ENCODE measurements at regions of chr17 and their contacts with region 1.

Region 1: DNA sequence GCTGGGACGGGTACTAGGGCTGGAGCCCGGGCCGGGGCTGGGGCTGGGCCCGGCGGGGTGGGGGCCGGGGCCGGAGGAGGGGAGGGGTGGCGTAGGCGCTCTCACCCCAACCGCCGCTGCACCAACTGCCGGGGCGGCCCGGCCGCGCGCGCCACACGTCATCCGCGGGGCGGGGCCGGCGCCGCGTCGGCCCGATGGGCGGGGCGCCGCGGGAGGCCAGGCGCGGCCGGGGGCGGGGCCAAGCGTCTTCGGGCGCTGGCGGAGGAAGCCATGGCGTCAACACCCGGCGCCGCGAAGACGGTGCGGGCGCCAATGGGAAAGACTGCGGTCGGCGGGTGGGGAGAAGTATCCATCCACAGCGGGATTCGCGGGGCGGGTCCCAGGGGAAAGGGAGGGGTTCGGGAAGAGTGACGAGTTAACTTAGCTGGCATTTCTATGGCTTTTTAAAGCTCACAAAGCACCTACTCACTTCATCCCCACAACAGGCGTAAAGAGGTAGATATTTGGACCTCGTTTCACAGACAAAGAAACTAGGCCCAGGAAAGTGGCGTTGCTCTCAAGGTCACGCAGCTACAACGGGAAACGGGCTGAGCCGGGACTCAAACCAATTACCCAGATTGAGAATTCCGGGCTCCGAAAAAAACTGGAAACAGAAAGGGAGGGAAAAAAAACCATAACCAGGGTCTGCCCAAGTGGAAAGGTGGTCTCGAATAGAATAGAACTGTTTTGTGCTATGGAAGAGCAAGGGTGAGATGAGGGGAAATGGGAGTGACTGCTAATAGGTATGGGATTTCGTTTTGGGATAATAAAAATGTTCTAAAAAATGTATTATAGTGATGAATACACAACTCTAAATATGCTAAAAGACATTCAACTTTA is at the start of gene SPAG9:
- DNase-seq: peak; percentile 97 to 98
- ATAC-seq: peak; percentile 89 to 97 (median 92)
- H3K4me3 ChIP-seq: peak within 1 kb of the TSS; percentile 74 to 99 (median 98)
- H3K27ac ChIP-seq: peak within 1 kb of the TSS; percentile 95 to 100 (median 98)
- H3K4me1 ChIP-seq: peaks cover 9 to 47% (median 29%) of the 10 kb centered on the region in 9 donors
- H3K27me3 ChIP-seq: no peaks in the 10 kb centered on the region
- CTCF ChIP-seq: no peak
- total RNA-seq, gene SPAG9: 43.3 to 65.8 (median 52.8) TPM

Region 2: DNA sequence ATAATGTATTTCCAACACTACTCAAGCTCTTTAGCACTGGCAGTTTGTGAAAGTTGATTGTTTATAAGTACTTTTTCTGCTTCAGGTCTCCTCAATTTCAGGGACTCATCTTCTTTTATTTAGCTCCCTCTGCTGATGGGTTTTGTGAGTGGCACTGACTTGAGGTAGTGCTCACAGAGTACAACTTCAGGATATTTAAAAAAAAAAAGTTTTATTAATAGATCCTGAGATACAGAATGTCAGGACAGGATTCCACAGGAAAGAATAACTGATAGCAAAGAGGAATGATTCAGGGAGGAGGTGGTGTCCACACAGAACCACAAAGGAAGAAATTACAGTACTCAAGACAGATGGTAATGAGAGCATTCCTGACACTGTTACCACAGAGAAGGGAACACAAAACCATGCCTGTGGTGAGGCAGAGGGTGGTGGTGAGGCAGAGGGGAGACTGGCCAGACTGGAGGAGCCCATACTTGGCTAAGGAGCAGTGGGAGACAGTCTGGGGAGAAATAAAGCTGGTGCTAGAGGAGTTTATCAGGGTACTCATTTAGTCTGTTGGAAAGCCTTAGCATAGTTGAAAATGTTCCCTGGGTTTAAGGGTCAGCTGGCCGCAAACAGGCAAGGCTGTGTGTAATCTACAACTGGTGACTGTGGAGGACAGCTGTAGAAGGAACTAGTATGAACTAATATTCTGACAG is 64.0 kb before region 1 on chr17:
- intact Hi-C with region 1: loop called in 1 of 10 experiments (anchors 5 kb)
- DNase-seq: peak in 1 of 2 donors; percentile 51
- ATAC-seq: peak; percentile 78 to 91 (median 82)
- H3K4me3 ChIP-seq: peak overlapping the region in 2 of 10 donors; percentile 1 to 9
- H3K27ac ChIP-seq: peak overlapping the region in 9 of 10 donors; percentile 49 to 76 (median 60)
- H3K4me1 ChIP-seq: peaks cover 0 to 29% (median 23%) of the 10 kb centered on the region in 9 donors
- H3K27me3 ChIP-seq: no peaks in the 10 kb centered on the region
- CTCF ChIP-seq: peak; percentile 22 to 74 (median 60)

Region 3: DNA sequence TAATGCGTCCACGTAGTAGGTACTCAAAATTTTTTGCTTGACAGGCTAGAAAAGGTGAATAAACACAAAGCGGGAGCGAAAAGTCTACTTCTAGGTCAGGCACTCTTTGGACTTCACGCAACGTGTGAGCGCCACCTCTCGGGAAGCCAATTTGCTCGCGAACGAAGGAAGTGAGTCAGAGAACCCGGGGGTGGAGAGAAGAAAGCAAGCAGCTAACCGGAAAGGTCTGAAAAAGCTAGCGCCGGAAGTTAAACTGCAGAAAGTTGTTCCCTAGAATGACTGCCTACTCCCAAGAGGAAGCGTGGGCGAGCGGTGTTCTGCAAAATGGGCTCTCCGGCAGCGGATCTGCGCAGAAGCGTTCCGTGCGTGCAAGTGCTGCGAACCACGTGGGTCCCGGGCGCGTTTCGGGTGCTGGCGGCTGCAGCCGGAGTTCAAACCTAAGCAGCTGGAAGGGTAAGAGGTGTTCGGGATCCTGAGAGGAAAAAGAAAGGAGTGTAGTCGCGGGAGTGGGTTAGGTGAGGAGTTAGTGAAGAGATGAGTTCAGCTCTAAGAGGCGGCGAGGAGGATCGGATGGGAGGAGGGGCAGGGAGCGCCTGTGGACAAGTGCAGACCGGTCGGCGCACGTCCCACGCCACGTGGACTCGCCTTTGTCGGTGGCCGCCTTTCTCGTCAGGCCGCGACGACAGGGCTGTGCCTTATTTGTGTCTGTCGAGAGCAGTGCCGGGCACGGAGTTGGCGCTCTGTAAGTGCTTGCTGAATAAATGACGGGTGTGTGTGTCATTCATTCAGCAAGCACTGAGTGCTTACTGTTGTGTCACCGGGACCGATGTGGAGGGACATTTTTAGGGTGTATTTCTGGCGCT is 32.5 kb after region 1 on chr17 and contains the start of gene NME1:
- intact Hi-C with region 1: loop called in 6 of 10 experiments (anchors 1 to 2 kb)
- DNase-seq: peak; percentile 92 to 98
- ATAC-seq: peak; percentile 96 to 99 (median 98)
- H3K4me3 ChIP-seq: peak within 1 kb of the TSS; percentile 51 to 90 (median 71)
- H3K27ac ChIP-seq: peak within 1 kb of the TSS; percentile 72 to 91 (median 82)
- H3K4me1 ChIP-seq: peaks cover 0 to 22% (median 12%) of the 10 kb centered on the region in 9 donors
- H3K27me3 ChIP-seq: no peaks in the 10 kb centered on the region
- CTCF ChIP-seq: peak; percentile 55 to 96 (median 76)
- total RNA-seq, gene NME1: 12.9 to 52.0 (median 21.8) TPM

Region 4: DNA sequence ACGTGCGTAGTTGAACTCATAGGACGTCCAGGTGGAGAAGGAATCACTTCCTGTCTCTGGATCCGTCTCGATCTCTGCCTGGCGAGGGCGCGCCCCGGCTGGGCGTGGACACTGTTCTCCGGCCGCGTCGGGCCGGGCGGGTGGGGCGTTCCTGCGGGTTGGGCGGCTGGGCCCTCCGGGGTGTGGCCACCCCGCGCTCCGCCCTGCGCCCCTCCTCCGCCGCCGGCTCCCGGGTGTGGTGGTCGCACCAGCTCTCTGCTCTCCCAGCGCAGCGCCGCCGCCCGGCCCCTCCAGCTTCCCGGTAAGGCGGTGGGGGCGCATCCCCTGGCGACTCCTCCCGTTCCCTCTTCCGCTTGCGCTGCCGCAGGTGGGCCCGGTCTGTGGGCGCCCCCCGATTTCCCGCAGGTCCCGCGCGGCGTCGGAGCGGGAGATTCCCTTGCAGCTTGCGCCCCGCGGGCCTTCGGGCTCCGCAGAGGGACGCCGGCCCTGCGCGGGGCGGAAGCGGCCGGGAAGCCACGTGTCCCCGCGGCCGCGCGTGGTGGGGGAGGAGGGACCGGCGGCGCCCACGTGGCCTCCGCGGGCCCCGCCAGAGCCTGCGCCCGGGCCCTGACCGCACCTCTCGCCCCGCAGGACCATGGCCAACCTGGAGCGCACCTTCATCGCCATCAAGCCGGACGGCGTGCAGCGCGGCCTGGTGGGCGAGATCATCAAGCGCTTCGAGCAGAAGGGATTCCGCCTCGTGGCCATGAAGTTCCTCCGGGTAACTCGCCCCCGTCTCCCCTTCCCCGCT is 45.4 kb after region 1 on chr17 and contains the start of gene NME2:
- intact Hi-C with region 1: loop called in 1 of 10 experiments (anchors 1 kb)
- DNase-seq: peak; percentile 90 to 93
- ATAC-seq: peak; percentile 95 to 97 (median 96)
- H3K4me3 ChIP-seq: peak within 1 kb of the TSS; percentile 65 to 97 (median 90)
- H3K27ac ChIP-seq: peak within 1 kb of the TSS; percentile 76 to 98 (median 93)
- H3K4me1 ChIP-seq: peaks cover 0 to 20% (median 14%) of the 10 kb centered on the region in 9 donors
- H3K27me3 ChIP-seq: no peaks in the 10 kb centered on the region
- CTCF ChIP-seq: peak in 1 of 9 donors; percentile 14
- total RNA-seq, gene NME2: 117 to 302 (median 208) TPM

Region 5: GRCh38 chr17:51833620-51834019 is 712.6 kb after region 1 on chr17:
- intact Hi-C with region 1: no loop called
- DNase-seq: no peak
- ATAC-seq: no peak
- H3K4me3 ChIP-seq: no peak overlapping the region
- H3K27ac ChIP-seq: no peak overlapping the region
- H3K4me1 ChIP-seq: no peaks in the 10 kb centered on the region
- H3K27me3 ChIP-seq: peaks cover 0 to 21% (median 5%) of the 10 kb centered on the region in 7 donors
- CTCF ChIP-seq: no peak

Measured in heart right ventricle (tissue), 16 donors.